Tibial artery (tissue), 4 donors: ENCODE measurements at regions of chr1 and their contacts with region 1.

Region 1: DNA sequence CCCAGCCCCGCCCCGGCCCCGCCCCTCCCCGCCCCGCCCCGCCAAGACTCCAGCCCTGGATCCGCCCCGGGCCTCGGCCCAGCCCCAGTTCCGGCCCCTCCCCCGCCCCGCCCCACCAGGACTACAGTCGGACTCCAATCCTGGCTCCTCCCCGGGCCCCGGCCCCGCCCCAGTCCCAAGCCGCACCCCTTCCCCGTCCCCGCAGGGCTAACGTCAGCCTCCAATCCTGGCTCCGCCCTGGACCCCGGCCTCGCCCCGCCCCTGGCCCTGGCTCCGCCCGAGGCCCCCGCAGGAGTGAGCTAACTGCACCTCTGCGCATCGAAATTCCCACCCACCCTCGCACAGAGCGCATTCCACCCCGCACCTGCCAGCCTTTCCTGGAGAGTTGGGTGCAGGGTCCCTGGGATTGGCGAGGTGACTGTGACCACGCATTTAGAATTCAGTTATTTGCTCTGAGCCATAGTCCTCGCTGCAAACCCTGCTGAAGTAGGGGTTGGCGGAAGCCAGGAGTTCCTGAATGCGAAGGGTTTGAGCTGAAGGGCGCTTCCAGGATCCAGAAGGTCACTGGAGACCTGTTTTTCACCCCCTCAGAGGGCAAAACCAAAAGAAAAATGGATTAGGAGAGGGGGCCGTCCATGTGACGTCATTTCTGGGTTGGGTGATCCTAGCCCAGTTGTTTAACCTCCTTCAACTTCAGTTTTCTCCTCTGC is 588 bp upstream of the IGSF8 start:
- DNase-seq: peak; percentile 96 to 99
- H3K4me3 ChIP-seq: peak overlapping the region; percentile 96
- H3K27ac ChIP-seq: peak overlapping the region; percentile 96 to 99
- H3K4me1 ChIP-seq: peaks cover 0 to 75% (median 64%) of the 10 kb centered on the region in 4 donors
- H3K27me3 ChIP-seq: no peaks in the 10 kb centered on the region
- CTCF ChIP-seq: peak in 1 of 2 experiments; percentile 13

Region 2: DNA sequence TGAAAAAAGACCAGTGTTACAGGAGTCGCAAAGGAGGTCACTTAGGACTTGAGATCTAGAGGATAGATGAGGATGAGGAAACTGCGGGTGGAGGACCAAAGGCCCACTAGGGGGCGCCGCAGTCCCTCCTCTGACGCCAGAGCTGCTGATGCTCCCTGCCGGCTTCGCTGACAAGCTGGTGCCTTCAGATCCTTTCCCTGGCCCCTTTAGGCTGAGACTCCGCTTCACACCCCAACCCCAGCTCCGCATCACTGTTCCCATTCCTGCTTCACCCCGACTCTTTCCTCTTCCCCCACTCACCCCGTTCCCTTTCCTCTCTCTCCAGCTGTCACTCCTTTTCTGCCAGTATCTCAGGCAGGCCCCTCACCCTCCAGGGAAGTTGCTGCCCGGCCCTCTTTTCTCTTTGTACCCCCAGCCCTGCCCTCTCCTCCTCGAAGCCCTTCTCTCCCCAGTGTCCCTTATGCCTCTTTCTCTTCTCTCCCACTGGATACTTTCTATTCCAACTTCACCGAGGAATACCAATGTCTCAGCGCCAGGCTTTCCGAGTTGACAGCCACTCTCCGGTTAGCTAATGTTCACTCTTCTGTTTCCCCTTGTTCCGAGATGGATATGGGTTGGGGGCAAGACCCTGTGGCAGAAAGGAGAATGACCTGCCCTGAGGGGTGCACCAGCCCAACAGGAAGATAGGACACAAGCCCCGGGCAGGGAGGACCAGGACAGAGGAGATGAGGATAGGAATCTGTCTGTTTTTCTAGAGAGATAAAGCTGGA is 13.1 kb before region 1 on chr1:
- intact Hi-C with region 1: loop called (anchors 1 kb)
- DNase-seq: peak; percentile 83 to 95
- H3K4me3 ChIP-seq: peak overlapping the region in 1 of 2 donors; percentile 4
- H3K27ac ChIP-seq: peak overlapping the region; percentile 77 to 84
- H3K4me1 ChIP-seq: peaks cover 0 to 45% (median 35%) of the 10 kb centered on the region in 4 donors
- H3K27me3 ChIP-seq: peaks cover 0 to 6% of the 10 kb centered on the region in 2 donors
- CTCF ChIP-seq: peak; percentile 76 to 91

Region 3: GRCh38 chr1:160159493-160160245 is 60.7 kb after region 1 on chr1:
- intact Hi-C with region 1: no loop called
- DNase-seq: no peak
- H3K4me3 ChIP-seq: no peak overlapping the region
- H3K27ac ChIP-seq: no peak overlapping the region
- H3K4me1 ChIP-seq: peaks cover 0 to 10% (median 0%) of the 10 kb centered on the region in 4 donors
- H3K27me3 ChIP-seq: no peaks in the 10 kb centered on the region
- CTCF ChIP-seq: no peak

Region 4: GRCh38 chr1:160219062-160219929 is 120.3 kb after region 1 on chr1:
- intact Hi-C with region 1: loop called (anchors 5 kb)
- DNase-seq: peak; percentile 55 to 78
- H3K4me3 ChIP-seq: no peak overlapping the region
- H3K27ac ChIP-seq: peak overlapping the region; percentile 61 to 81
- H3K4me1 ChIP-seq: peaks cover 0 to 34% (median 25%) of the 10 kb centered on the region in 4 donors
- H3K27me3 ChIP-seq: no peaks in the 10 kb centered on the region
- CTCF ChIP-seq: peak; percentile 71 to 76

Region 5: GRCh38 chr1:160251687-160252526 is 152.9 kb after region 1 on chr1:
- intact Hi-C with region 1: loop called (anchors 10 kb)
- DNase-seq: peak; percentile 67 to 82
- H3K4me3 ChIP-seq: no peak overlapping the region
- H3K27ac ChIP-seq: peak overlapping the region; percentile 26 to 49
- H3K4me1 ChIP-seq: peaks cover 0 to 51% (median 11%) of the 10 kb centered on the region in 4 donors
- H3K27me3 ChIP-seq: no peaks in the 10 kb centered on the region
- CTCF ChIP-seq: peak; percentile 64 to 81